Naive thymus-derived CD4-positive, alpha-beta T cell (primary cell): ENCODE measurements at regions of chr2 and their contacts with region 1.

Region 1: GRCh38 chr2:105369747-105370690 is 28.8 kb downstream of the FHL2 start:
- DNase-seq: peak; percentile 62 to 85 (median 80)
- ATAC-seq: peak; percentile 98
- H3K4me3 ChIP-seq: no peak overlapping the region
- H3K4me3 Mint-ChIP-seq: peak overlapping the region in 4 of 10 donors; percentile 2 to 49 (median 35)
- H3K27ac ChIP-seq: no peak overlapping the region
- H3K27ac Mint-ChIP-seq: peak overlapping the region in 2 of 9 donors; percentile 33 to 63
- H3K4me1 ChIP-seq: peaks cover 0 to 16% of the 10 kb centered on the region in 2 donors
- H3K4me1 Mint-ChIP-seq: peaks cover 7 to 24% (median 12%) of the 10 kb centered on the region in 7 donors
- H3K27me3 ChIP-seq: no peaks in the 10 kb centered on the region
- H3K27me3 Mint-ChIP-seq: peaks cover 0 to 2% (median 0%) of the 10 kb centered on the region in 5 donors

Region 2: DNA sequence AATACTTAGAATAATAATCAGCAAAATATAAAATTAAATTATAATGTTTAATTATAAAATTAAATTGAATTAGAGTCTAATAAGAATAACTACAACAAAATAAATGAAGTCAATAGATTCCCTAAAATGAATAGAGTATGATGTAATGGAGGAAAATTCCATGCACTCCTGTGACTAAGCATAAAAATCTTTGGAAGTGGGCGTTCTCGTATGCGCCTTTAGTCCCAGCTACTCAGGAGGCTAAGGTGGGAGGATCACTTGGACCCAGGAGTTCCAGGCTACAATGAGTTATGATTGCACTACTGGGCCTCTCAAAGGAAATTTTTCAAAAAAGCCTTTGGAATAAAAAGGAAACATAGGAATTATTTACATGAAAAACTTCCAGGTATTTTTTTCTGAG is 1471.5 kb before region 1 on chr2:
- CTCF ChIA-PET with region 1: no interaction called
- POLR2A ChIA-PET with region 1: no interaction called
- intact Hi-C with region 1: no loop called
- DNase-seq: no peak
- ATAC-seq: no peak
- H3K4me3 ChIP-seq: no peak overlapping the region
- H3K4me3 Mint-ChIP-seq: no peak overlapping the region
- H3K27ac ChIP-seq: no peak overlapping the region
- H3K27ac Mint-ChIP-seq: no peak overlapping the region
- H3K4me1 ChIP-seq: no peaks in the 10 kb centered on the region
- H3K4me1 Mint-ChIP-seq: no peaks in the 10 kb centered on the region
- H3K27me3 ChIP-seq: no peaks in the 10 kb centered on the region
- H3K27me3 Mint-ChIP-seq: no peaks in the 10 kb centered on the region

Region 3: DNA sequence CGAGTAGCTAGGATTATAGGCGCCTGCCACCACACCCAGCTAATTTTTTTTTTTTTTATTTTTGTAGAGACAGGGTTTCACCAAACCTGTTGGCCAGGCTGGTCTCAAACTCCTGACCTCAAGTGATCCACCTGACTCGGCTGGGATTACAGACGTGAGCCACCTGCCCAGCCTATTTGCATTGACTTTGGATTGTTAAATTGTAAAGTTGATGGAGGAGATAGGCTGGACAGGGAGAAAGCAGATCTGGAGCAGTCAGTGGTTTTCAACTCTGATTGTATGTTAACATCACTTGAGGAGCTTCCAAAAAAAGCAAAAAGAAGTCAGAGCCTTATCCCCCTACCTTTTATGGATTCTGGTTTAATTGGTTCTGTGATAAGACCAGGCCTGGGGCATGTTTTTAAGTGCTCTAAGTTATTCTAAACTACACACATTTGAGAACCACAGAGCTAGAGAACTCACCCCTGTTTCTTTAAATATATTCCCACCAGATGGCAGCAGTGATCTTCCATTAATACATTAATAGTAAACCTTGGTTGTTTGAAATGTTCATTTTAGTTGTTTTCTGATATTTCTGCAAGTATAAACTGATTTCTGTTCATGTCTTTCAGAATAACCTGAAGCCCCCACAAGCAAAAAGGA is 25.2 kb before region 1 on chr2:
- CTCF ChIA-PET with region 1: interaction called, 4 read pairs
- POLR2A ChIA-PET with region 1: no interaction called
- intact Hi-C with region 1: loop called in 1 of 2 experiments (anchors 2 kb)
- DNase-seq: peak in 5 of 9 donors; percentile 31 to 49 (median 43)
- ATAC-seq: peak; percentile 65
- H3K4me3 ChIP-seq: no peak overlapping the region
- H3K4me3 Mint-ChIP-seq: no peak overlapping the region
- H3K27ac ChIP-seq: no peak overlapping the region
- H3K27ac Mint-ChIP-seq: peak overlapping the region in 1 of 9 donors; percentile 50
- H3K4me1 ChIP-seq: no peaks in the 10 kb centered on the region
- H3K4me1 Mint-ChIP-seq: peaks cover 4 to 20% (median 9%) of the 10 kb centered on the region in 7 donors
- H3K27me3 ChIP-seq: no peaks in the 10 kb centered on the region
- H3K27me3 Mint-ChIP-seq: no peaks in the 10 kb centered on the region

Region 4: GRCh38 chr2:105521205-105521604 is 151.2 kb after region 1 on chr2:
- CTCF ChIA-PET with region 1: interaction called, 52 read pairs
- POLR2A ChIA-PET with region 1: no interaction called
- intact Hi-C with region 1: loop called (anchors 1 kb)
- DNase-seq: peak in 4 of 9 donors; percentile 8 to 16 (median 16)
- ATAC-seq: no peak
- H3K4me3 ChIP-seq: no peak overlapping the region
- H3K4me3 Mint-ChIP-seq: no peak overlapping the region
- H3K27ac ChIP-seq: no peak overlapping the region
- H3K27ac Mint-ChIP-seq: no peak overlapping the region
- H3K4me1 ChIP-seq: no peaks in the 10 kb centered on the region
- H3K4me1 Mint-ChIP-seq: no peaks in the 10 kb centered on the region
- H3K27me3 ChIP-seq: no peaks in the 10 kb centered on the region
- H3K27me3 Mint-ChIP-seq: peaks cover 0 to 6% (median under 1%) of the 10 kb centered on the region in 5 donors

Region 5: DNA sequence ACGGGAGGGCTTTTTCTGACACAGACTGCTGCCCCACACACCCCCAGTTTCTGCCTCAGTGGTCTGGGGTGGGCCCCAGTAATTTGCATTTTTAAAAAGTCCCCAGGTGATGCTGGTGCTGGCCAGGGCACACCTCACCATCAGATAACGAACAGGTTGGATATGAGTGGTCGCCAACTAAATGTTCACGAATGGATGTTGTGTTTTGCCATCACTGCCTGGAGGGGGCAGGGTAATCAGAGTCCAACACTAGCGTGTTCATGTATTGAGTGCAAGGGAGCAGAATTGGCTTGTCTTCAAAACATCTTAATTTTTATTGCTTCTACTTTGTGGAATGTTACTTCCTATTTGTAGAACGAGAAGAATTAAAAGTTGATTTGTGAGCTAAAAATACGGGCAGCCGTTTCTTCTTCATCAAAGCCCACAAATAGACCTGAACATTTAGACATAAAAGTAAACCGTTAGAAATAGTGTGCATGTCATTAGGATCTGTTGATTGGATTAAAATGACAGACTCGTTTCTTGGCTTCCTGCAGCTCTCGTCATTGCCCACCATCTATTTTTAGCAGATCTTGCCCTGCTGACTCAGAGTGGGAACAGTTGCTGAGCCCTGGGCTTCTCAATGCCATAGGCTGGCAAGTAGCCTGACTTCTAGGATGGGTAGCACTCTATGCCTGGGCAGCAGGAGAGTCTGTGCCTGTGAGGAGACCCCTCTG is 419.9 kb after region 1 on chr2:
- CTCF ChIA-PET with region 1: no interaction called
- POLR2A ChIA-PET with region 1: no interaction called
- intact Hi-C with region 1: loop called in 1 of 2 experiments (anchors 10 kb)
- DNase-seq: peak in 6 of 9 donors; percentile 38 to 78 (median 53)
- ATAC-seq: peak; percentile 79
- H3K4me3 ChIP-seq: peak overlapping the region; percentile 38
- H3K4me3 Mint-ChIP-seq: peak overlapping the region; percentile 52 to 89 (median 72)
- H3K27ac ChIP-seq: peak overlapping the region; percentile 63
- H3K27ac Mint-ChIP-seq: peak overlapping the region; percentile 81 to 99 (median 92)
- H3K4me1 ChIP-seq: peaks cover 86 to 92% of the 10 kb centered on the region in 2 donors
- H3K4me1 Mint-ChIP-seq: peaks cover 62 to 100% (median 94%) of the 10 kb centered on the region in 7 donors
- H3K27me3 ChIP-seq: no peaks in the 10 kb centered on the region
- H3K27me3 Mint-ChIP-seq: no peaks in the 10 kb centered on the region

Region 6: GRCh38 chr2:106582148-106583143 is 1212.4 kb after region 1 on chr2:
- CTCF ChIA-PET with region 1: no interaction called
- POLR2A ChIA-PET with region 1: interaction called, 3 read pairs
- intact Hi-C with region 1: loop called (anchors 1 to 10 kb)
- DNase-seq: peak; percentile 25 to 71 (median 56)
- ATAC-seq: peak; percentile 83
- H3K4me3 ChIP-seq: peak overlapping the region; percentile 56
- H3K4me3 Mint-ChIP-seq: peak overlapping the region; percentile 75 to 95 (median 92)
- H3K27ac ChIP-seq: no peak overlapping the region
- H3K27ac Mint-ChIP-seq: peak overlapping the region in 5 of 9 donors; percentile 43 to 82 (median 67)
- H3K4me1 ChIP-seq: peaks cover 0 to 14% of the 10 kb centered on the region in 2 donors
- H3K4me1 Mint-ChIP-seq: peaks cover 4 to 17% (median 13%) of the 10 kb centered on the region in 7 donors
- H3K27me3 ChIP-seq: no peaks in the 10 kb centered on the region
- H3K27me3 Mint-ChIP-seq: peaks cover 33 to 60% (median 45%) of the 10 kb centered on the region in 5 donors